Cardiac septum (tissue), 1 donor: ENCODE measurements at regions of chr21 and their contacts with region 1.

Region 1: GRCh38 chr21:16588433-16588860 is 858.7 kb downstream of the USP25 start:
- DNase-seq: peak; percentile 85

Region 2: DNA sequence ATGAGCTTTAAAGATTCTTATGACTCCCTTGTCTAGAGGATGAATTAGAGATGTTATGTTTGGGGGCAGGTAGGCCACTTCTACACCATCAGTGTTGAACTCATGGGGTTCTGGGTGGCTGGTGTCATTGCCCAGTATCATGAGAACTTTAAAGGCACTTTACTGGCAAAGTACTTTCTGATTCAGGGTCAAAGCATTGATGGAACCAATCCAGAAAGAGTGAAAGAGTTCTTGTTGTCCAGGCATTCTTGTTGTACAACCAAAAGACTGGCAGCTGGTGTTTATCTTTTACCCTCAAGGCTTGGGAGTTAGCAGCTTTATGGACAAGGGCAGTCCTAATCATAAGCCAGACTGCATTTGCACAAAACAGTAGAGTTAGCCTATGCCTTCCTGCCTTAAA is 185.7 kb before region 1 on chr21:
- intact Hi-C with region 1: no loop called
- DNase-seq: no peak

Region 3: GRCh38 chr21:16454399-16454798 is 134.0 kb before region 1 on chr21:
- intact Hi-C with region 1: loop called (anchors 10 kb)
- DNase-seq: no peak

Region 4: DNA sequence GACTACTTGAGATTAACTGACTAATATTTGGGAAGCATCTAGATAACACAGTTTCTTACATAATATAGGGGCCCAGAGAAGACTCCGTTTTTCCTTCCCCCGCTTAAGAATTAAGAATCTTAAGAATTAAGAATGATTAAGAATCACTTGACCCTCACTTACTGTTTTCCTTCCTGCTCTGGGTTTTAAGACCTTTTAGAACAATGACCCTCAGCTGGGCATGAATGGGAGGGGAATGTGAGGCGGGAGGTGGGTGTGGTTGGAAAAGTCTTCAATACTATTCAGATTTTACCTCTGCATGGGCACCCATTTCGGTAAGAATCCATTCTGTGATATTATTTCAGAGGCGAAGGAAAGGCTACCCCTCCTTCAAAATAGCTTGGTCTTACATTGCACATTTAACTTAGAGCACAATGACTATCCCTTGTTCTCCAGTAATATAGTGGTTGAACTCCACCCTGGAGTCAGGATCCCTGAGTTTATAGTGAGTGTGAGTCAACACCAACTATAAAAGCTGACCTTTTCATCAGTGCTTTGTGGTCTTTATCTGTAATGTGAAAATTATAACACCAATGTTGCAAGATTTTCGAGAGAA is 37.2 kb before region 1 on chr21:
- intact Hi-C with region 1: no loop called
- DNase-seq: no peak

Region 5: GRCh38 chr21:16633831-16634459 is 45.5 kb after region 1 on chr21:
- intact Hi-C with region 1: no loop called
- DNase-seq: no peak